ENCODE measurements at regions of chr6 and their contacts with region 1.

Region 1: DNA sequence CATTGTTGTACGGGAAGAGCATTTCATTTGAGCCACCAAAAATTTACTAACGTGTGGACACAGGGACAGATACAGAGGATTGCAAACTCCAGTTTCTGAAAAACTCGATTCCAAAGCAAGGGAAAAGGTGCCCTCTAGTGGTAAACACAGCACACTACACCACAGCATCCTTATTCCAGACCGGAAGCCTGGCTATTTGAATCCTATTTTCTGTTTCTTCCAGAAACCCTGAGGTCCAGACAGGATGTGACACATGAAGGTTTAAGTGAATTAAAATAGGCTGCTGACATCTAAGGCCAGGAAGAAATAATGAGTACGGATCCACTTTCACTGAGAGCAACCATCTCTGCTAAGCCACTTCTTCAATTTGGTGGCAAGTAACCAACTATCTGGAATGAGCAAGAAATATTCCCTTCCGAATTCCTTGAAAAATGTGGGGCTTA is 31.8 kb upstream of the GMPR start:
- H3K4me3 ChIP-seq: no peak overlapping the region
- H3K27ac ChIP-seq: peak overlapping the region; percentile 89; the same call in 1 of the 2 replicates
- H3K4me1 ChIP-seq: peaks cover 8% of the 10 kb centered on the region
- CTCF ChIP-seq: peak; percentile 70

Region 2: DNA sequence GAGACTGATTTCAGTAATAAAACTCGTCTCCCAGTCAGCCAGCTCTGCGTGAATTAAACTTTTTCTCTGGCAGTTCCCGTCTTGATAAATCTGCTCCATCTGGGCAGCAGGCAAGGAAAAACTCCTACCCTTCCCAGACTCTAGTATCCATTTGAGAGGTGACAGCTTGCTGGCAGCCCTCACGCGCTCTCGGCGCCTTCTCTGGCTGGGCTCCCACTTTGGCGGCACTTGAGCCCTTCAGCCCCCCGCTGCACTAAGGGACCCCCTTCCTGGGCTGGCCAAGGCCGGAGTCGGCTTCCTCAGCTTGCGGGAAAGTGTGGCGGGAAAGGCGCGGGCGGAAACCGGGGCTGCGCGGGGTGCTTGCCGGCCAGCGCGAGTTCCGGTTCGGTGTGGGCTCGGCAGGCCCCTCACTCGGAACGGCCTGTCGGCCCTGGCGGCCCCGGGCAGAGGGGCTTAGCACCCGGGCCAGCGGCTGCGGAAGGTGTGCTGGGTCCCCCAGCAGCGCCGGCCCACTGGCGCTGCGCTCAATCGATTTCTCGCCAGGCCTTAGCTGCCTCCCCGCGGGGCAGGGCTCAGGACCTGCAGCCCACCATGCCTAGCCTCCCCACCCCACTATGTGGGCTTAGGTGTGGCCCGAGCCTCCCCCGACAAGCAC is 10.0 kb after region 1 on chr6:
- CTCF ChIA-PET with region 1: interaction called, 15 read pairs
- POLR2A ChIA-PET with region 1: interaction called, 3 read pairs
- H3K4me3 ChIP-seq: no peak overlapping the region
- H3K27ac ChIP-seq: no peak overlapping the region
- H3K4me1 ChIP-seq: no peaks in the 10 kb centered on the region
- CTCF ChIP-seq: no peak

Region 3: DNA sequence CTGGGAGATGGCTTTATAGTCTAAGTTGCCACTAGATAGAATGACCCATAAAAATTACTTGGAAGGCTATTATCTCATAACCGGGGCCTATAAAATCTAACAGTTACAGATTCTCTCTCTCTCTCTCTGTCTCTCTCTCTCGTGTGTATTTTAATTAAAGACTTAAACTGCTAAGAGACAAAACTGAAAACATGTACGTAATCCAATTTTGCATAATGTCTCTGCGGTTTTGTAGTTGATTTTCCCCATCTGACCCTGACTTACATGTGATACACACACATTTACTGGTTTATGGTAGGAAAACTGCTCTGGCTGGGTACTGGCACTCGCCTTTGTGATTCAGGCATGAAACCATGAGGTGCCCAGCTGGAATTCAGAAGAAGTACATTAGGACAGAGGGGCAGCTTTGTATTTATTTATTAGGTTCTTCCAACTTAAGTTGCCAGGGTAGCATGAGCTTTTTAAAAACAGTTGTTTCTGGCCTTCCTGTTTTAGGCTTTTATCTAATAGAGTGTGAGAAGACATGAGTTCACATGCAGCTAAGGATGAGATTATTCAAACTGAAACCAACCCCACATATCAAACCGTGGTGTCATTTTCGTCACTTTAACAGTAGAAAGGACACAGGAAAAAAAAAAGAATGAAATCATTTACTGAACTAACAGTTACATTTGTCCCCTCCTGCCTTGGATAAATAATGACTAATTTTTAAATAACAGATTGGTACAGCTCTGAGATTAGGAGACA is 214.3 kb after region 1 on chr6:
- CTCF ChIA-PET with region 1: no interaction called
- POLR2A ChIA-PET with region 1: no interaction called
- H3K4me3 ChIP-seq: no peak overlapping the region
- H3K27ac ChIP-seq: no peak overlapping the region
- H3K4me1 ChIP-seq: peaks cover 15% of the 10 kb centered on the region; the same call in 1 of the 2 replicates
- CTCF ChIP-seq: no peak